ENCODE measurements at regions of chr16 and their contacts with region 1.

Region 1: GRCh38 chr16:28182183-28182582 is 29.6 kb downstream of the XPO6 start:
- DNase-seq: no peak
- H3K4me3 Mint-ChIP-seq: peak overlapping the region; percentile 75
- H3K27ac Mint-ChIP-seq: peak overlapping the region; percentile 93
- H3K4me1 Mint-ChIP-seq: peaks cover 80% of the 10 kb centered on the region
- H3K27me3 Mint-ChIP-seq: no peaks in the 10 kb centered on the region

Region 2: DNA sequence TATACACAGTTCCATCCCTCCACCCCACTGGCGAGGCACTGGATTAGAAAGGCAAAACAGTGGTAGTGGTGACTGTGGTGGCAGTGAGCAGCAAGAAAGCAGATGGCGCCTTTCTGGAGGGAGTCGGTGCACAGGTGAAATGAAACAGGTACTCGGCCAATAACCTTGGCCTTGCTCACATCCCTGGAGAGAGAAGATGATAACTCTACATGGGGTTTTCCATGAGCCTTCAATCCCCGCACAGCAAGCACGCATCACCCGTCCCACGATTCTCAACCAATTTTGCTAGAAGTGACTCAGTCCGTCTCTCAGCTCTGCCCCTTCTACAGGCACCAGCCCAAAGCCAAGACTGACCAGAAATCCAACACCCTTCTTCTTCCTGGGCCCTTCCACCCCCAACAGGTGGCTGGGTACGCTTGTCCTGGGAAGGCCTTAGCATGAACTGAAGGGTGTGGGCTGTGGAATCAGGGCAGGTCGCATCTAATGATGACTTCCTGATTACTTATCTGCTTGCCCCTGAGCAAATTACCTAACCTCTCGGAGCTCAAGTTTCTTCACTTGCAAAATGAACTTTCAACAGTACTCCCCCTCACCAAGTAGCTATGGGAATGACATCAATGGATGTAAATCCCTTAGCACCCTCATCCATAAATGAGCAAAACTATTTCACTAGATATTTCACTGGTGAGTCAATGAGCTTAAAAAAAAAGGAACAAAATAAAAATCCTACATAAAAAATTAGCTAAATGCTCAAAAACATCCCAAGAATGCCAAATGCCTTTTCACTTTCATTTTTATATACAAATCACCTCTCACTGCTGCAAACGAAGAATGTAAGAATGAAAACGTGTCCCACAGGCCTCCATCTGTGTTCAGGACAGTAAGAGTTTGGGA is 11.6 kb after region 1 on chr16:
- intact Hi-C with region 1: loop called (anchors 1 kb)
- DNase-seq: peak; percentile 35
- H3K4me3 Mint-ChIP-seq: peak overlapping the region; percentile 77
- H3K27ac Mint-ChIP-seq: peak overlapping the region; percentile 86
- H3K4me1 Mint-ChIP-seq: peaks cover 78% of the 10 kb centered on the region
- H3K27me3 Mint-ChIP-seq: no peaks in the 10 kb centered on the region